Activated T-helper 2 cell treated with anti-CD3 and anti-CD28 coated beads, Interferon-gamma antibody, Interleukin-2, Interleukin-4, amounts not matched to agents 10 μg/mL and 5 μg/mL and 100 μg/mL, durations not matched to agents 14 hours and 24 hours and 36 hours (primary cell): ENCODE measurements at regions of chr15 and their contacts with region 1.

Region 1: DNA sequence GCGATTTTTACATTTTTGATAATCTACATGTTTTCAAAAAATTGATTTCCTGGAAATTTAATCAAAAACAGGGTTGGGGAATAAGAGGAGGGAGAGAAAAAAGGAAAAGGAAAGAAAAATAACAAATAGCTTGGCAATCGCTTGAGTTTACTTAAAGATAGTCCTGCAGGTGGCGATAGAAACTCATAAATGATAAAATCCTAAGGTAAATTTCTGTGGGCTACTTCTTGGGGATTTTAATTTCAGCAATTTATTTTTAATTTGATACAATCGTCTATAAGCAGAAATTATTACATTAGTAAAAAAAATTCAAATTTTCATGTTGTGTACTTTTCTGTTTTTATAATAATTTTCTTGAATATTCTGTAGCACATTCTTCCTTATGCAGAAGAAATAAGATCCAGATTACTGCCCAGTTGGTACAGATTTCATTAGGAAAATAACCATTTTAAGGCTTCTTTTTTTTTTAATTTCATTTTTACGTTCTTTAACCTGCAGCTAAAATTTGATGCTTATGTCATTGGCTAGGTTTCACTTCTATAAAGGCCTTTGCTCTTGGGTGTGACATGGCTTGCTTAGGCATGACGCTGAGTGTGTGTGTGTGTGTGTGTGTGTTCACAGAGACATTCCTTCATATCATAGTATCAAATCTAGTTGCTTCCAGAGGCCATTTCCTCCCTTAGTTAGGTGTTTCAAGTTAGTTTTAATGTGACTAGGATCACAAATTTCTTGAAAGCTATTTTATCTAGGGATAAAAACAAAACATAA is 181.8 kb downstream of the MCTP2 start:
- DNase-seq: no peak
- H3K4me3 Mint-ChIP-seq: no peak overlapping the region
- H3K27ac Mint-ChIP-seq: no peak overlapping the region
- H3K4me1 Mint-ChIP-seq: no peaks in the 10 kb centered on the region
- H3K27me3 Mint-ChIP-seq: no peaks in the 10 kb centered on the region

Region 2: DNA sequence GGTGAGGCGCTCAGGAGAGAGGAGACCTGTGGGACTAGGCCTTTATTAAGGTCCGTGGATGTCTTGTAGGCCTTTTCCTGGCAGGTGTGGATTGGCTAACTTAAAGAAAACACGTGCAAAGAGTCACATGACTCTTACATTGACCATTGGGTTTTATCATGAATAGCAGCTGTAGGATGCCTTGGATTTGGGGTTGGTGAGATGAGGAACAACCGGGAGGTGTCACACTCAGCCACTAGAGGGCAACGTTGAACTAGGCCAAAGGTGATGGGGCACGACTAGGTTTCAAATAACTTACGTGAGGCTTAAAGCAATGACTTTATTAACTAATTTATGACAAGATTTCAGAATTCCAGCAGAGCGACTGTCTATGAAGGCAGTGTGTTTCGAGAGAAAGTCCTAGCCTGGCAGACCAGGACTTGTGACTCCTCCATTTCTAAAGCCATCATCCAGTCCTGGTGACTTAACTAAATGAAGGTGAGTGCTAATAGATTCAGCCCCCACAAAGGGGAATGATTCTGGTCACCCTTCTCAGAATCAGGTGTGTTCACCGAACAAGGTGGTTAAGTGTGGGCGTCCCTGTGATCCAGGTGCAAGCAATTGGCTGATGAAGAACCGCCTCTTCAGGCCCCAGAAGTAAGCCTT is 163.8 kb after region 1 on chr15:
- intact Hi-C with region 1: loop called (anchors 10 kb)
- DNase-seq: peak; percentile 35
- H3K4me3 Mint-ChIP-seq: no peak overlapping the region
- H3K27ac Mint-ChIP-seq: no peak overlapping the region
- H3K4me1 Mint-ChIP-seq: peaks cover 2% of the 10 kb centered on the region
- H3K27me3 Mint-ChIP-seq: peaks cover 47% of the 10 kb centered on the region

Region 3: GRCh38 chr15:95059418-95059817 is 646.3 kb after region 1 on chr15:
- intact Hi-C with region 1: no loop called
- DNase-seq: no peak
- H3K4me3 Mint-ChIP-seq: no peak overlapping the region
- H3K27ac Mint-ChIP-seq: no peak overlapping the region
- H3K4me1 Mint-ChIP-seq: no peaks in the 10 kb centered on the region
- H3K27me3 Mint-ChIP-seq: no peaks in the 10 kb centered on the region